ENCODE measurements at regions of chr2 and their contacts with region 1.

Region 1: DNA sequence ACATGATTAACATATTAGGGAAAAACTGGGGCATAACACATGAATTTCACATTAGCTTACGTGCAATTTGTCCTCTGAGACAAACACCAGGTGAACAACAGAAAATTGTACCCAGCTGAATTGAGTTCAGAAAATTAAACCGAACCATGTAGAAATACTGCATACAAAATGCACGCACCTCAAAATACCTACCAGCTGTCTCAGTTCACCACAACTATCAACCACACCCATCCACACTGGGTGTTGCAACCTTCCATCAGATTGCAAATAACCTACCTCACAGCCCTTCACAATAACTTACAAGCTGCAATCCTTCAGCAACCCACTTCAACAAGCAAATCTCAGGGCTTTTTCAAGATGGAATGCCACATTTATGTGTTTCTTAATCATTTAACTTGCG is 55.9 kb downstream of the UNC50 start:
- DNase-seq: peak; percentile 79
- H3K4me3 Mint-ChIP-seq: peak overlapping the region; percentile 58
- H3K27ac Mint-ChIP-seq: peak overlapping the region; percentile 99
- H3K4me1 Mint-ChIP-seq: peaks cover 66% of the 10 kb centered on the region
- H3K27me3 Mint-ChIP-seq: no peaks in the 10 kb centered on the region

Region 2: DNA sequence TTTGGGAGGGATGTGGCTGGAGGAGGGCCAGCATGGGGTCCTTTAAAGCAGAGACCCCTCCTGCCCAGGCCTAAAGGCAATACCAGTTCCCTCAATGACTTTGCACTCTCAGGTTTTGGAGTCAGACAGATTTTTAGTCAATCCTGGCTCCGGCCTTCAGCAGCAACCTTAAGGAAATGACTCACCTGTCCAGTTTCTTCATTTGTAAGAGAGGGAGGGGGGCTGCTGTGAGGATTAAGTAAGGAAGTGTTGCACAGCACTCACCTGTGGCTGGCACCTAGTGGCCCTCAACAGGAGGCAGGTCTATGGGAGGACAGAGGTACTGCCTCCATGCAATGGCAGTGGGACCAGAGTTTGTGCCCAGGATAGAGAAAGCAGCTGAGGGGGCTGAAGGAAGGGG is 304.3 kb before region 1 on chr2:
- CTCF ChIA-PET with region 1: no interaction called
- POLR2A ChIA-PET with region 1: no interaction called
- DNase-seq: no peak
- H3K4me3 Mint-ChIP-seq: no peak overlapping the region
- H3K27ac Mint-ChIP-seq: no peak overlapping the region
- H3K4me1 Mint-ChIP-seq: no peaks in the 10 kb centered on the region
- H3K27me3 Mint-ChIP-seq: peaks cover 24% of the 10 kb centered on the region

Region 3: DNA sequence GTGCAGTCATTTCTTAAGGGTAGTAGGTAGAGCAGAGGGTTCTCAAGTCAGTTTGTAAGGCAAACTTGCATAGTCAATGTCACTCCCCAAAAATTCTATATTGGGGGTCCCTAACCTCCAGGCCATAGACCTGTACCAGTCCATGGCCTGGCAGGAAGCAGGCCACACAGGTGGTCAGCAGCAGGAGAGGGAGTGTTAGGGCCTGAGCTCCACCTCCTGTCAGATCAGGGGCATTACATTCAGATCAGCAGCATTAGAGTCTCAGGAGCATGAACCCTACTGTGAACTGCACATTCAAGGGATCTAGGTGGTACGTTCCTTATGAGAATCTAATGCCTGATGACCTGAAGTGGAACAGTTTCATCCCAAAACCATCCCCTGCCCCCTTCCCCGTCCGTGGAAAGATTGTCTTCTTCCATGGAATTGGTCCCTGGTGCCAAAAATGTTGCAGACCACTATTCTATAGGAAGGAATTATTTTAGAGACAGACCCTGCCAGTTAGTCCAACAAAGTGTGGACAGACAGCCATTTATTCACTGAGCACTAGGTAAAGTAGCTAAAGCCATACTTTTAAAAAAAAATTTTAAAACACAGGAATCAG is 62.7 kb before region 1 on chr2:
- CTCF ChIA-PET with region 1: no interaction called
- POLR2A ChIA-PET with region 1: no interaction called
- DNase-seq: peak; percentile 34
- H3K4me3 Mint-ChIP-seq: no peak overlapping the region
- H3K27ac Mint-ChIP-seq: no peak overlapping the region
- H3K4me1 Mint-ChIP-seq: peaks cover 27% of the 10 kb centered on the region
- H3K27me3 Mint-ChIP-seq: no peaks in the 10 kb centered on the region

Region 4: DNA sequence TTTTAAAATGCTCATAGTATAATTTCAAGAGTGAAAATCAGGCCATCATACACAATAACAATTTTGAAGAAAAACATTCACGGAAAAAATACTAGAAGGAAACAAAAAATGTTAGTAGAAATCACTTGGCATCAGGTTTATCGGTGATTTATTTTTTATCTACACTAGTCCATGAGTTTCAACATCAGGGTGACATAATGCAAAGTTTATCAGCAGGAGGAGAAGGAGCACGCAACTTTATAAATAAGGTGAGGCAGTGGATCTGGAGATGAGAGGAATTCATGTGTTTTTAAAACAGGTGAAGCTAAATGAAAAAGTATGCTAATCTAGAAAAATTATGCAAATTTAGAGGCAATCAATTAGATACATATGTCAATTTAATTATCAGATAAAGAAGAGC is 12.4 kb after region 1 on chr2:
- CTCF ChIA-PET with region 1: interaction called, 4 read pairs
- POLR2A ChIA-PET with region 1: interaction called, 10 read pairs
- DNase-seq: no peak
- H3K4me3 Mint-ChIP-seq: no peak overlapping the region
- H3K27ac Mint-ChIP-seq: no peak overlapping the region
- H3K4me1 Mint-ChIP-seq: peaks cover 9% of the 10 kb centered on the region
- H3K27me3 Mint-ChIP-seq: no peaks in the 10 kb centered on the region

Region 5: GRCh38 chr2:98944775-98945174 is 280.4 kb after region 1 on chr2:
- CTCF ChIA-PET with region 1: no interaction called
- POLR2A ChIA-PET with region 1: no interaction called
- DNase-seq: no peak
- H3K4me3 Mint-ChIP-seq: no peak overlapping the region
- H3K27ac Mint-ChIP-seq: no peak overlapping the region
- H3K4me1 Mint-ChIP-seq: no peaks in the 10 kb centered on the region
- H3K27me3 Mint-ChIP-seq: peaks cover 16% of the 10 kb centered on the region

Measured in activated CD4-positive, alpha-beta memory T cell treated with anti-CD3 and anti-CD28 coated beads, Interleukin-2, amount 10 ng/mL, durations not matched to agents 7 days and 5 days (primary cell).